Activated naive CD8-positive, alpha-beta T cell treated with anti-CD3 and anti-CD28 coated beads, Interleukin-2, amount 10 ng/mL, durations not matched to agents 7 days and 5 days (primary cell): ENCODE measurements at regions of chr19 and their contacts with region 1.

Region 1: DNA sequence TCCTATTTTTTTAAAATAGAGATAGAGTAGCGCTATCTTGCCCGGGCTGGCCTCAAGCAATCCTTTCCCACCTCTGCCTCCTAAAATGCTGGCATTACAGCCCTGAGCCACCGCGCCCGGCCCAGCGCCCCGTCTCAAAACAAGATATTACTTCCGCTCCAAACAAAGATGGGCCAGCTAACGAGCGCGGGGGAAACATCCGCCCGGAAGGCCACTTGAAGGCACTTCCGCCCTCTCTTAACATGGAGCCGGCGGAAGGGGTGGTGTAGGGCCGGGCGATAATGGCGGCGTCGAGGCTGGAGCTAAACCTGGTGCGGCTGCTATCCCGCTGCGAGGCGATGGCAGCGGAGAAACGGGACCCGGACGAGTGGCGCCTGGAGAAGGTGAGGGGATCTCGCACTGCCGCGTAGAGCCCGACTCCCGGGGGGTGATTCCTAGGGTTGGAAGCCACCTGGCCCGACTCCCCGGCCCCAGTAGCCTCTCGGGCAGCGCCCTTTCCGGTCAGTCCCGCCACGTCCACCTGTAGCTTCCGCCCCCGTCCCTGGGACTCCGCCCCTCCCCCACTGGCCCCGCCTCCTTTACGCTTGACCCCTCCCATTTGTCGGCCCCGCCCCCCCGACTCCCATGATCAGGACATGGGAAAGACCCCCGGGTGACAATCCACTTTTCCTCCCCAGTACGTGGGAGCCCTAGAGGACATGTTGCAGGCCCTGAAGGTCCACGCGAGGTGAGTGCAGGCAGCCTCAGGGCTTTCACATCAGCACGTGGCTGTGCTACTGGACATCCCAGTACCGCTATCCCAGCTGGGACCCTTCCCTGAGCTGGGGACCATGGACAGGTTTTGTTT is at the start of gene USE1:
- DNase-seq: peak; percentile 83
- ATAC-seq: peak; percentile 95
- H3K4me3 Mint-ChIP-seq: peak within 1 kb of the TSS; percentile 90
- H3K27ac Mint-ChIP-seq: peak within 1 kb of the TSS; percentile 99
- H3K4me1 Mint-ChIP-seq: peaks cover 13% of the 10 kb centered on the region
- H3K27me3 Mint-ChIP-seq: no peaks in the 10 kb centered on the region
- total RNA-seq, gene USE1: 30.1 to 31.8 TPM

Region 2: GRCh38 chr19:17075035-17075863 is 140.1 kb before region 1 on chr19 and contains the starts of genes HAUS8 and MYO9B:
- POLR2A ChIA-PET with region 1: interaction called, 10 read pairs
- DNase-seq: peak; percentile 99
- ATAC-seq: peak; percentile 90
- H3K4me3 Mint-ChIP-seq: peak within 1 kb of the TSS; percentile 99
- H3K27ac Mint-ChIP-seq: peak within 1 kb of the TSS; percentile 98
- H3K4me1 Mint-ChIP-seq: peaks cover 45% of the 10 kb centered on the region
- H3K27me3 Mint-ChIP-seq: no peaks in the 10 kb centered on the region
- total RNA-seq, gene HAUS8: 50.7 to 51.7 TPM
- total RNA-seq, gene MYO9B: 275 to 285 TPM

Region 3: DNA sequence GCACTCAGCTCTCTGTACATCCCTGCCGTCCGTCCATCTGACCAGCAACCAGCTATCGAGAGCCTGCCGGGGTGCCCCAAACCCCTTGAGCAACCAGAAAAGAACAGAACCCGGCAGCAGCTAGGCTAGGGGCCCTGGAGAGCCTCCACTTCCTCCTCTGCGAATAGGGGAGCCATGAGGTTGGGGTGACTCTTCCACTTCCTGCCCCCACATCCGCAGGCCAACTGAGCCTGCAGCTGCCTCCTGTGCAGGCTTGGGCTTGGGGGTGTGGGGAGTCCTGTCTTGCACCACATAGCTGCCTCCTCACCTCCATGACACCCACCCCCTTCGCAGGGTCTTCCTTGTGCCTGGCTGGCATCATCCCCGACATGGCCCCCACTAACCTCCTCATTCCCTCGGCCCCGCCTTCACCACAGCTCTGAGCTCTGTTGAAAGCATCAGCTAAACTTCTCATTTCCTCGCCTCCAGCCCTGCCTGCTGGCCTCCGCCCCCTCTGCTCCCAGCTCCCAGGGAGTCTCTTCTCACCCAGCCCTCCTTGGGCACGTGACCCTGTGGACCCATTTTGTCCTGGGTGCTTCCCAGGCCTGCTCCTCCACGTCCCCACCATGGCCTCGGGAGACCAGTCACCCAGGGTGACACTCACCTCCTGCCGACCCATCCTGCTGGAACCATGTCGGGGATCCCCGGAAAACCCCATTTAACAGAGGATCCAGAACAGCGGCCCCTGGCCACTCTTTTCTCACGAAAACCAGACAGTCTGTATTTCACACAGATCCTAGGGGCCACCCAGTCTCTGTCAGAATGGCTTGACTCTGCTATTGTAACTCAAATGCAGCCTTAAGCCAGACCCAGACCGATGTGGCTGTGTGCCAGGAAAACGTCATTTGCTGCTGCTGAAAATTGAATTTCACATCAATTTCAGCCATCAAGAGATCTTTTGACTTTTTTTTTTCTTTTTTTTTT is 89.4 kb before region 1 on chr19:
- POLR2A ChIA-PET with region 1: interaction called, 14 read pairs
- DNase-seq: peak; percentile 84
- ATAC-seq: peak; percentile 93
- H3K4me3 Mint-ChIP-seq: peak overlapping the region; percentile 89
- H3K27ac Mint-ChIP-seq: peak overlapping the region; percentile 99
- H3K4me1 Mint-ChIP-seq: peaks cover 49% of the 10 kb centered on the region
- H3K27me3 Mint-ChIP-seq: no peaks in the 10 kb centered on the region

Region 4: DNA sequence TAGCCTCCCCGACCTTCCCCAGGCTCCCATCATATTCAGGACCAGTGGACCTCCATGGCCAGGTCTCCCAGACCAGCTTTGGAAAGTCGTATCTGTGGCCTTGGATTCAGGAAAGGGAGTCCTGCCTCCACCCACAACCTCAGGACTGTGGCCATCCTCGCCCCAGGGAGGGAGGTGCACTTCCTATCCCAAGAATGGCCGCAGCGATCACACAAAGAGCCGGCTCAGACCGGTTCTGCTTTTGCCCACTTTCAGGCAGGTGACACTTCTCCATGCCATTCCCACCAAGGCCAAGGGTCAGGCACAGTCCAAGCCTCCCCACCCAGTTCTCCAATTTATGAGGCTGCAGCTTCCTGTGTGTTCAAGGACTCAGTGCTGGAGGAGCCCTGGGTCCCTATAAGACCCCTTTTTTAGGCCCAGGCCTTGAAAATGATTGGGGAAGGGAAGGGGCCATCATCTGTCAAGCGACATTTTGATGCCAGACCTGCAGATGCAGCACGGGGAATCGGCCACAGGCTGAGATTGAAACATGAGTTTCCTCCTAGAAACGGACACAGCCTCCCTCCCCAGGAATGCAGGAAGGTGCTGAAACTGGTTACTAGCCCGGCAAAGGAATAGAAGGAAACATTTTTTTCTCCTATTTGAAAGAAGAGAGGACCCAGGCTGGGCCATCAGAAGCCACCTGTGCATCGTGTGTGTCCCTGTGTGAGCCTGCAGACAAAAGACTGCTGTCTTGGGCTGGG is 65.8 kb before region 1 on chr19:
- POLR2A ChIA-PET with region 1: no interaction called
- DNase-seq: no peak
- ATAC-seq: no peak
- H3K4me3 Mint-ChIP-seq: no peak overlapping the region
- H3K27ac Mint-ChIP-seq: peak overlapping the region; percentile 25
- H3K4me1 Mint-ChIP-seq: peaks cover 6% of the 10 kb centered on the region
- H3K27me3 Mint-ChIP-seq: no peaks in the 10 kb centered on the region

Region 5: DNA sequence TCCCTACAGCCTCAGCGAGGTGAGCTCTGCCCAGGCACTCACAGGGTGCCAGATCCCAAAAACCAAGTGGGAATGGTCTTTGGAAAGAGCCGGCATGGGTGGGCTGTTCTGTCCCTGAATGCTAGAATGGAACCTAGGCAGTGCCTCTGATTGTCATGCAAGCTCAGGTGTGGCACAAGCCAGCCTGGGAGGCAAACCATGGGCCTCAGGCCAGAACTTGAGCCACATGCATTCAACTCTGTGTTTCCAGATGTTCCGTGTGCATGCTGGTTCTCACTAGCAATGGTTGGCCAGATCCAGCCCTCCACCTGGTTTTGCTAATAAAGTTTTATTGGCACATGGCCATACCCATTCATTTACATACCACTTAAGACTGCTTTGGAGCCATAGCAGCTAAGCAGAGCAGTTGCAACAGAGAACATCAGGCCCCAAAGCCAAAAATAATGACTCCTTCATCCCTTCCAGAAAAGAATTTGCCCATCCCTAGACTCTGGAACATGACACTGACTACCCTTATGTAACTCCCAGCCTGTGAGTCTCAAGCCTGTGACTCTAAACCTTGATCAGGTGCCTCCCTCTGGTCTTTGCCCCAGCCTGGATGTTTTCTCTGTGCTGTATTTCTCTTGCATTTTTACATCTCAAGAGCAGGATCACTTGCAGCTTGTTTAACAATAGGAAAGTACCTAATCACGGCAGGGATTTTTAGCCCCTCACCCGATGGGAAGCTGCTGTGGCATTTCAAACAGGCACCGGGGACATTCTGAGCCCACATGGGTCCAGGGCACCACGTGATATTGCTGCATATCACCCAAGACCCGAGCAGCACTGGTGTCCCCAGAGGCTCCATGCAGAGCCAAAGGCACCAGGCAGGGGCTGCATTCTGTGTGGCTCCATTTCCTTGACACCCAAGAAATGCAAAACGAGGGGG is 55.6 kb before region 1 on chr19:
- POLR2A ChIA-PET with region 1: no interaction called
- DNase-seq: no peak
- ATAC-seq: no peak
- H3K4me3 Mint-ChIP-seq: no peak overlapping the region
- H3K27ac Mint-ChIP-seq: peak overlapping the region; percentile 67
- H3K4me1 Mint-ChIP-seq: no peaks in the 10 kb centered on the region
- H3K27me3 Mint-ChIP-seq: no peaks in the 10 kb centered on the region

Region 6: GRCh38 chr19:17226002-17226933 is 10.9 kb after region 1 on chr19 and contains the start of gene OCEL1:
- POLR2A ChIA-PET with region 1: interaction called, 48 read pairs
- DNase-seq: peak; percentile 95
- ATAC-seq: peak; percentile 95
- H3K4me3 Mint-ChIP-seq: peak within 1 kb of the TSS; percentile 93
- H3K27ac Mint-ChIP-seq: peak within 1 kb of the TSS; percentile 98
- H3K4me1 Mint-ChIP-seq: peaks cover 7% of the 10 kb centered on the region
- H3K27me3 Mint-ChIP-seq: no peaks in the 10 kb centered on the region
- total RNA-seq, gene OCEL1: 31.8 to 39.0 TPM

Region 7: DNA sequence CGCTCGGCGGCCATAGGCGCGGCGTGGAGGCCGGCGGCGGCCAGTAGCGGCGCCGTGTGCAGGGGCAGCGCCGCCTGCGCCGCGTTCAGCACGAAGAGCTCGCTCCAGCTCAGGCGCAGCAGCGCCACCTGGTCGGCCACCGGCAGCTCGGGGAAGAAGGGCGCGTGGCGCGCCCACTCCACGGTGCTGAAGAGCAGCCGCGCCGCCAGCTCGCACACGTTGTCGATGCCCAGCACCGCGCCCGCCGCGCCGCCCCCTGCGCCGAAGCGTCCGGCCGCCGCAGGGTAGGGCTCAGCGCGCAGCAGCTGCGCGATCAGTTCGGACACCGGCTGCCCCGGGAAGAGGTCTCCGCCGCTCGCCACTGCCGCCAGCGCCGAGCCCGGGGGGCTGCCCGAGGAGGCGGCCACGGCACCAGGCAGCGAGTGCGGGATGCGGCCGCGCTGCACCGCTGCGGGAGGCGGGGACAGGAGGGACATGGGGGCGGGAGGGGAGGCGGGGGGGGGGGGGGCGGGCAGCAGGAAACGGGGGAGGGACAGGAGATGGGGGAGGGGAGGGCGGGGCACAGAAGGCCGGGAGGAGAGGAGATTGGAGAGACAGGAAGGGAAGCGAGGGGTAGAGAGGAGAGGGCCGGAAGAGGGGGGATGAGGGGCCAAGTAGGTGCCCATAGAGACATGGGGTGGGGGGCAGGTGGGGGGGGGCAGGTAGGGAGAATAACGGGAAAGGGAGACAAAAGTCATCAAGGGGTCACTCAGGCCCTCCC is 20.4 kb after region 1 on chr19:
- POLR2A ChIA-PET with region 1: interaction called, 11 read pairs
- DNase-seq: peak; percentile 84
- ATAC-seq: peak; percentile 94
- H3K4me3 Mint-ChIP-seq: peak overlapping the region; percentile 81
- H3K27ac Mint-ChIP-seq: peak overlapping the region; percentile 56
- H3K4me1 Mint-ChIP-seq: peaks cover 5% of the 10 kb centered on the region
- H3K27me3 Mint-ChIP-seq: peaks cover 2% of the 10 kb centered on the region